ENCODE measurements at regions of chr17 and their contacts with region 1.

Region 1: DNA sequence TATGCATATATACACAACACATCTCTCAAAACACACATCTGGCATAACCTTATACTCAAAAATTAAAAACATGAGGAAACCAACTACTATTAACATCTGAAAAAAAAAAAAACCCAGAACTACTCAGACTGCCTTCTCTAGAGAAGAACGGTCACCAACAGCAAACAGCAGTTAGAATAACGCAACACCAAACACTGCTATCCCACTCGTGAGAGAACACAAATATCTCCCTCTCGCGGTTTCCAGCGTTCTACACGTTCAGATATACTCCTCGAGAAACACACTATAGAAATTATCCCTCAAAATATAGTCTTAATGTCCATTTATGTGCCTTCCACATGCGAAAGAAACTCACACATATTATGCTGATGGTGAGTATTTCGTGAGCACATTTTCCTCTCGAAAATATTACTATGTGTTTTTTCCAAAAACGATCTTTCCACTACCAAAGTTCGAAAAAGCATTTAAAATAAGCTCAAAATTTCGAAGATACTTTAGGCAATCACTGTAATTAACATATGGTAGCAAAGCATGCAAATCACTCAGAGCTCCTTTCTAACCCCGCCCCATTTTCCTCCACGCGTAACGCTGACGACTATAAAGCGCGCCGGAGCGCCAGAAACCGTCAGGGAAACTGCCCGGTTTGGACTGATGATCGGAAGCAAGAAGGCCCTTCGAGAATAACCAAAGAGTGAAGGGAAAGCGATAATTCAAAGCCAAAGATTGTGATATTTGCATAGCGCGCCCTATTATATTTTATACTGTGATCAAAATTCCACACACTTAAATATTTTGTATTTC is 60.1 kb downstream of the TEX14 start:
- DNase-seq: peak; percentile 99
- H3K4me3 Mint-ChIP-seq: no peak overlapping the region
- H3K27ac Mint-ChIP-seq: no peak overlapping the region
- H3K4me1 Mint-ChIP-seq: peaks cover 2% of the 10 kb centered on the region
- H3K27me3 Mint-ChIP-seq: peaks cover 4% of the 10 kb centered on the region

Region 2: GRCh38 chr17:58364270-58364942 is 267.3 kb before region 1 on chr17:
- intact Hi-C with region 1: no loop called
- DNase-seq: no peak
- H3K4me3 Mint-ChIP-seq: no peak overlapping the region
- H3K27ac Mint-ChIP-seq: no peak overlapping the region
- H3K4me1 Mint-ChIP-seq: no peaks in the 10 kb centered on the region
- H3K27me3 Mint-ChIP-seq: no peaks in the 10 kb centered on the region

Region 3: DNA sequence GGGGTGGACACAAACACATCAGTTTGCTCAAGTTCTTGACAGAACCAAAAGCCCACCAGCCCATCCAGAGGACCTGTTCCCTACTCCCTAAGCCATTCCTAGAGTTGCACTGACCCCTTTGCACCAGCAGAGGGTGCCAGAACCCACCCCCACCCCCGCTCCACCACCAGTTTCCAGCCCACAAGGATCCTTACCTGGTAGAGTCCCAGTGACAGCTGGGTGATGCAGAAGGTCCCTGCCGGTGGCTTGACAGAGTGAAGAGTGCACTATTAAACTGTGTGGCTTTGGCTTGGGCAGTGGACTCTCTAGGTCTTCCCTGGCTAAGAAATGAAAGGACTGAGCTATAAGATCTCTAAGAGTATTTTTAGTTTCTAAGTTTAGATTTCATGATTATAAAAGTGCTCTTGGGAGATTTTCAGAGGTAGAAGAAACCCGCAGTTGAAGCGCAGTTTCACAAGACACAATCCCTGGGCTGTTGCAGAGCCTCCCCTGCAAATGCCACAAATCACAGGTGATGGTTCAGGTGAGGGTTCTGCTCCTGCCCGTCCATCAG is 43.9 kb before region 1 on chr17:
- intact Hi-C with region 1: loop called (anchors 2 kb)
- DNase-seq: peak; percentile 82
- H3K4me3 Mint-ChIP-seq: no peak overlapping the region
- H3K27ac Mint-ChIP-seq: no peak overlapping the region
- H3K4me1 Mint-ChIP-seq: peaks cover 1% of the 10 kb centered on the region
- H3K27me3 Mint-ChIP-seq: peaks cover 6% of the 10 kb centered on the region

Region 4: GRCh38 chr17:58692239-58693055 is 60.7 kb after region 1 on chr17 and contains the start of gene RAD51C:
- intact Hi-C with region 1: loop called (anchors 1 kb)
- DNase-seq: peak; percentile 97
- H3K4me3 Mint-ChIP-seq: peak within 1 kb of the TSS; percentile 95
- H3K27ac Mint-ChIP-seq: peak within 1 kb of the TSS; percentile 96
- H3K4me1 Mint-ChIP-seq: peaks cover 21% of the 10 kb centered on the region
- H3K27me3 Mint-ChIP-seq: no peaks in the 10 kb centered on the region
- total RNA-seq, gene RAD51C: 73.7 and 78.8 TPM in 2 replicates

Region 5: GRCh38 chr17:58710936-58711775 is 79.4 kb after region 1 on chr17:
- intact Hi-C with region 1: no loop called
- DNase-seq: peak; percentile 80
- H3K4me3 Mint-ChIP-seq: no peak overlapping the region
- H3K27ac Mint-ChIP-seq: no peak overlapping the region
- H3K4me1 Mint-ChIP-seq: peaks cover 11% of the 10 kb centered on the region
- H3K27me3 Mint-ChIP-seq: no peaks in the 10 kb centered on the region

Region 6: DNA sequence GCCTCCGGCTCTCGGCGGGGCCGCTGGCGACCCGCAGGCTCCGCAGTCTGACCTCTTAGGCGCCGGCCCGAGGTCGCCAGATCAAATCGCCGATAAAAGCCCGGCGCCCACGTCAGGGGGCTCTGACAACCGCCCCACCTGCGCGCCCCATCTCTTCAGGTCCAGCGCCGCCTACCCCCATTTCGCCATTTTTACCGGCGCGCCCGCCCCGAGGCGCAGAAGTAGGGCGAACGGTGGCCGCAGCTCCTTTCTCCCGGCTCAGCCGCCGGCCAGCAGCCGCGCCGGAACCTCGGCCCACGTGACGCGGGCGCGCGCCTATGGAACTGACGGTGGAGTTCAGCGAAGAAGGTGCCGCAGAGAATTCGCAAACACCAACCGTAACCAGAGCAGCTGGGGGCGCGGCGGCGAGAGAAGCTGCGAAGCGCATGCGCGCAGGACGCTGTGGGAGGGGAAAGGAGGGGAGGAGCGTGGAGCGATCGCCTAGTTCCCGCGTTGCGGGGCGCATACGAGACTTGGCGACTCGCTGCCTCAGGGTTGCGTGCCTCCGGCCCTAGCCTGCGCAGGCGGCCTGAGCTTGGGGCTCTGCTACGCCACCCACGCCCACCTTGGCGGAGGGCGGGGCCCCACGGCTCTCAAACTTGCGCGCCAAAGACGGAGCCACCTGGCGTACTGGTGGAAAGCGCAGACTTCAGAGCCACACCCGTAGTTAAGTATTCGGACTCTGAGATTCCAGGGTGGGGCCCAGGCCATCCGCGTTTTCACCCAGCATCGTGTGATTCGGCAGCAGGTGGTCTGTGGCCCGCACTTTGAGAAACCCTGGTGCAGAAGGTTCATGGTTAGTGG is 475.0 kb after region 1 on chr17 and contains the start of gene TRIM37:
- intact Hi-C with region 1: loop called (anchors 1 kb)
- DNase-seq: peak; percentile 100
- H3K4me3 Mint-ChIP-seq: peak within 1 kb of the TSS; percentile 96
- H3K27ac Mint-ChIP-seq: peak within 1 kb of the TSS; percentile 97
- H3K4me1 Mint-ChIP-seq: peaks cover 42% of the 10 kb centered on the region
- H3K27me3 Mint-ChIP-seq: peaks cover 2% of the 10 kb centered on the region
- total RNA-seq, gene TRIM37: 26.5 and 29.3 TPM in 2 replicates

Measured in activated CD4-positive, alpha-beta T cell treated with anti-CD3 and anti-CD28 coated beads, Interleukin-2, amount 10 ng/mL, durations not matched to agents 24 days and 14 days (primary cell).